ENCODE measurements at regions of chr17 and their contacts with region 1.

Region 1: GRCh38 chr17:42183741-42184711 is 1.2 kb downstream of the HCRT start:
- DNase-seq: peak; percentile 49 to 88 (median 74)
- ATAC-seq: peak; percentile 54
- H3K4me3 ChIP-seq: peak overlapping the region; percentile 75 to 91
- H3K4me3 Mint-ChIP-seq: peak overlapping the region; percentile 90
- H3K27ac ChIP-seq: peak overlapping the region; percentile 42 to 74
- H3K27ac Mint-ChIP-seq: peak overlapping the region; percentile 83
- H3K4me1 ChIP-seq: peaks cover 35% of the 10 kb centered on the region
- H3K4me1 Mint-ChIP-seq: peaks cover 37% of the 10 kb centered on the region
- H3K27me3 ChIP-seq: peaks cover 8 to 9% of the 10 kb centered on the region in 2 experiments
- H3K27me3 Mint-ChIP-seq: peaks cover 17% of the 10 kb centered on the region
- CTCF ChIP-seq: peak; percentile 68

Region 2: DNA sequence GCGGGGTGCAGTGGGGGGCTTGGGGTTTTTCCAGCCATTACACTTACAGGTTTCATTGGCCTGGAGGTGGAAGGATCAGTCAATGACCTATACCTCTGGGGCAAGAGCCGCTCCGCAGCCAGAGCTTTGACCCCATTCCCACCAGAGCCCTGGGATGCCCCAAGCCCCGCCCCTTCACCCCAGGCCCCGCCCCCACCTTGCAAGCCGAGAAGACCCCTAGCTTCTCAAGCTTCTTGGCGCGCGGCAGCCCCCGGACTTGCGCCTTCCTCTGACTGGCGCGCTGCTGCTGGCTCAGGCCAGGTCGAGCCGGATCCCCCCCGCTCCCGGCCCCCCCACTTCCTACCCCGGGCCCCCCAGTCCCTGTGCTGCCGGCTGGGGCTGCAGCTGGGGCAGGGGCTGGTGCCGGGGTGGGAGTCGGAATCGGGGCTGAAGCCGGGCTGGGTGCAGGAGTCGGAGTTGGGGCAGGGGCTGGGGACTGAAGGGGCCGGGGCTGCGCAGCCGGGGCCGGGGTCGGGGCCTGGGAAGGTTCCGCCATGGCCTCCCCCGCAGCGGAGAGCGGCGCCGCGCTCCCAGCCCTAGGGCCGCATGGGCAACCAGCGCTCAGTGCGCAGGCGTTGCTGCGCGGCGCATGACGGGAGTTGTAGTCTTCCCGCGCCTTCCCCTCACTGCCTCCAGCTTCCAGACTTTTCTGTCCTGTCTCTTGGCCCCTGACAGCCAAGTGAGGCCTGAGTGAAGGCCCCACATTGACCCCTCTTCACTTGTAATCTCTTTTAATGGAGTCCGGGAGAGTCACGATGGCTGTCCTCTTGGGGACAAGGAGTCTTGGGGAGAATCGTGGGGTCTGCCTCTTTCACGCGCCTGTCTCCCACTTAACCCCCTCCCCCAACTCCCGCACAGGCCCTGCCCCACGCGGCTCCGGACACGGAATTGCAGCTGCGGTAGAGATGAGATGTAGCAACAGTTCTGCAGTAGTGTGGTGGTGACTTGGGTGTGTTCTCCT is 63.0 kb before region 1 on chr17 and contains the start of gene KAT2A:
- CTCF ChIA-PET with region 1: no interaction called
- POLR2A ChIA-PET with region 1: no interaction called
- intact Hi-C with region 1: loop called (anchors 2 to 5 kb)
- DNase-seq: peak; percentile 52 to 89 (median 75)
- ATAC-seq: peak; percentile 88
- H3K4me3 ChIP-seq: peak within 1 kb of the TSS; percentile 38 to 65
- H3K4me3 Mint-ChIP-seq: peak within 1 kb of the TSS; percentile 76
- H3K27ac ChIP-seq: no peak within 1 kb of the TSS
- H3K27ac Mint-ChIP-seq: no peak within 1 kb of the TSS
- H3K4me1 ChIP-seq: peaks cover 13% of the 10 kb centered on the region
- H3K4me1 Mint-ChIP-seq: peaks cover 22% of the 10 kb centered on the region
- H3K27me3 ChIP-seq: no peaks in the 10 kb centered on the region
- H3K27me3 Mint-ChIP-seq: no peaks in the 10 kb centered on the region
- CTCF ChIP-seq: no peak
- total RNA-seq, gene KAT2A: 39.3 to 42.5 TPM

Region 3: GRCh38 chr17:42193969-42194899 is 10.2 kb after region 1 on chr17 and contains the start of gene GHDC:
- CTCF ChIA-PET with region 1: interaction called, 23 read pairs
- POLR2A ChIA-PET with region 1: interaction called, 16 read pairs
- intact Hi-C with region 1: loop called in 1 of 2 experiments (anchors 1 kb)
- DNase-seq: peak; percentile 50 to 86 (median 76)
- ATAC-seq: peak; percentile 98
- H3K4me3 ChIP-seq: peak within 1 kb of the TSS; percentile 79 to 93
- H3K4me3 Mint-ChIP-seq: peak within 1 kb of the TSS; percentile 95
- H3K27ac ChIP-seq: peak within 1 kb of the TSS; percentile 49 to 82
- H3K27ac Mint-ChIP-seq: peak within 1 kb of the TSS; percentile 88
- H3K4me1 ChIP-seq: peaks cover 22% of the 10 kb centered on the region
- H3K4me1 Mint-ChIP-seq: peaks cover 22% of the 10 kb centered on the region
- H3K27me3 ChIP-seq: no peaks in the 10 kb centered on the region
- H3K27me3 Mint-ChIP-seq: no peaks in the 10 kb centered on the region
- CTCF ChIP-seq: no peak
- total RNA-seq, gene GHDC: 6.6 to 6.7 TPM

Region 4: GRCh38 chr17:42227849-42228615 is 44.0 kb after region 1 on chr17:
- CTCF ChIA-PET with region 1: interaction called, 10 read pairs
- POLR2A ChIA-PET with region 1: no interaction called
- intact Hi-C with region 1: loop called in 1 of 2 experiments (anchors 2 kb)
- DNase-seq: no peak
- ATAC-seq: no peak
- H3K4me3 ChIP-seq: no peak overlapping the region
- H3K4me3 Mint-ChIP-seq: no peak overlapping the region
- H3K27ac ChIP-seq: no peak overlapping the region
- H3K27ac Mint-ChIP-seq: peak overlapping the region; percentile 37
- H3K4me1 ChIP-seq: no peaks in the 10 kb centered on the region
- H3K4me1 Mint-ChIP-seq: peaks cover 8% of the 10 kb centered on the region
- H3K27me3 ChIP-seq: no peaks in the 10 kb centered on the region
- H3K27me3 Mint-ChIP-seq: no peaks in the 10 kb centered on the region
- CTCF ChIP-seq: no peak

Region 5: DNA sequence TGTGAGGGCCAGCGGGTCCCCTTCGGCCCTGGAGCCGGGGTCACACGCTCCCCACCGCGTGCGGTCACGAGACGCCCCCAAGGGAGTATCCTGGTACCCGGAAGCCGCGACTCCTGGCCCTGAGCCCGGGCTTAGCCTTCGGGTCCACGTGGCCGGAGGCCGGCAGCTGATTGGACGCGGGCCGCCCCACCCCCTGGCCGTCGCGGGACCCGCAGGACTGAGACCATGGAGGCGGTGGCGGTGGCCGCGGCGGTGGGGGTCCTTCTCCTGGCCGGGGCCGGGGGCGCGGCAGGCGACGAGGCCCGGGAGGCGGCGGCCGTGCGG is 352.0 kb after region 1 on chr17 and contains the start of gene NAGLU:
- CTCF ChIA-PET with region 1: no interaction called
- POLR2A ChIA-PET with region 1: no interaction called
- intact Hi-C with region 1: loop called in 1 of 2 experiments (anchors 1 kb)
- DNase-seq: peak; percentile 47 to 89 (median 76)
- ATAC-seq: peak; percentile 69
- H3K4me3 ChIP-seq: peak within 1 kb of the TSS; percentile 56 to 82
- H3K4me3 Mint-ChIP-seq: peak within 1 kb of the TSS; percentile 87
- H3K27ac ChIP-seq: peak within 1 kb of the TSS; percentile 33 to 71
- H3K27ac Mint-ChIP-seq: peak within 1 kb of the TSS; percentile 87
- H3K4me1 ChIP-seq: peaks cover 38% of the 10 kb centered on the region
- H3K4me1 Mint-ChIP-seq: peaks cover 42% of the 10 kb centered on the region
- H3K27me3 ChIP-seq: no peaks in the 10 kb centered on the region
- H3K27me3 Mint-ChIP-seq: no peaks in the 10 kb centered on the region
- CTCF ChIP-seq: no peak
- total RNA-seq, gene NAGLU: 7.4 TPM